Sigmoid colon (tissue), 7 donors: ENCODE measurements at regions of chr1 and their contacts with region 1.

Region 1: GRCh38 chr1:31564134-31564989 is 12.0 kb upstream of the TINAGL1 start:
- DNase-seq: no peak
- H3K4me3 ChIP-seq: no peak overlapping the region
- H3K27ac ChIP-seq: peak overlapping the region in 3 of 4 donors; percentile 51 to 62 (median 53)
- H3K4me1 ChIP-seq: peaks cover 0 to 13% (median 8%) of the 10 kb centered on the region in 4 donors
- H3K27me3 ChIP-seq: peaks cover 0 to 7% (median 0%) of the 10 kb centered on the region in 3 donors
- CTCF ChIP-seq: peak; percentile 84 to 88 (median 86)
- EP300 ChIP-seq: no peak
- POLR2A ChIP-seq: no peak

Region 2: GRCh38 chr1:31593770-31594632 is 29.6 kb after region 1 on chr1:
- intact Hi-C with region 1: loop called (anchors 1 kb)
- DNase-seq: peak; percentile 87
- H3K4me3 ChIP-seq: no peak overlapping the region
- H3K27ac ChIP-seq: no peak overlapping the region
- H3K4me1 ChIP-seq: peaks cover 0 to 16% (median 13%) of the 10 kb centered on the region in 4 donors
- H3K27me3 ChIP-seq: no peaks in the 10 kb centered on the region
- CTCF ChIP-seq: peak; percentile 81 to 95 (median 88)
- EP300 ChIP-seq: no peak
- POLR2A ChIP-seq: no peak

Region 3: GRCh38 chr1:31617917-31618660 is 53.7 kb after region 1 on chr1:
- intact Hi-C with region 1: no loop called
- DNase-seq: no peak
- H3K4me3 ChIP-seq: peak overlapping the region; percentile 11 to 57 (median 45)
- H3K27ac ChIP-seq: no peak overlapping the region
- H3K4me1 ChIP-seq: peaks cover 0 to 14% (median 11%) of the 10 kb centered on the region in 4 donors
- H3K27me3 ChIP-seq: peaks cover 10 to 36% (median 22%) of the 10 kb centered on the region in 3 donors
- CTCF ChIP-seq: peak in 3 of 4 experiments; percentile 42 to 75 (median 61)
- EP300 ChIP-seq: no peak
- POLR2A ChIP-seq: no peak